ENCODE measurements at regions of chr2 and their contacts with region 1.

Region 1: GRCh38 chr2:156199588-156199987 is 132.9 kb downstream of the NR4A2 start:
- DNase-seq: no peak
- ATAC-seq: no peak

Region 2: DNA sequence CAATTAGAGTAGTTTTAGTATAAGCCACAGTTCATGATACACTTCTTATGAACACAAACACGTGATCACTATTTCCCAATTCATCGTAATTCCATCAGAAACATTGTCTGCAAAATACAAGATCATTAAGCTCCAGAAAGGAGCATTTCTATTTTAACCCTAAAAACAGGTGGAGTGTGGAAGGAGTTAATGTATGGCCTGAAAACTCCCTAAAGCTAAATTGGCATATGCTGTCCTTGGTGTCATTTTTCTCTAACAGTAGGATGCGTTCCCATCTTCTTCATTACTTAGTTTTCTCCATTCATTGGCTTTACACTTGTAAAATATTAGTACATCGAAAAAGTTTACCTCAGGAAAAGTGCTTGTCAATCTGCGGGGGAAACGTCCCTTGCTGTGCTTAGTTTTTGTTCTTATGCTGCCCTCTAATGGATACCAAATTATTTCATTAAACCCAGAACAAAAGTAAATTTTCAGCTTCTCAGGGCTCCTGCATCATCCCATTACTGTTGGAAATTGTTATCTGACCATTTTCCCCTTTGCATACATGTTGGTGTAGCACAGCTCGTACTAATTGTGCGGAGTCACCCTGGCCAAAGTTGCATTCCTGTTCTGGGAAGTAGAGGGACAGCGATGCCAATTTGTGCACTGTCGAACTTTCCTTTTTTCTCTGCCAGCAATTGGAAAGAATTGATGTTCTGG is 389.9 kb after region 1 on chr2:
- intact Hi-C with region 1: loop called (anchors 5 kb)
- DNase-seq: no peak
- ATAC-seq: peak; percentile 37